Mammary epithelial cell (primary cell): ENCODE measurements at regions of chr9 and their contacts with region 1.

Region 1: GRCh38 chr9:123225374-123225813 is 43.0 kb downstream of the STRBP start:
- DNase-seq: peak; percentile 88
- H3K4me3 ChIP-seq: no peak overlapping the region
- H3K27ac ChIP-seq: no peak overlapping the region
- H3K4me1 ChIP-seq: peaks cover 13% of the 10 kb centered on the region
- H3K27me3 ChIP-seq: no peaks in the 10 kb centered on the region
- CTCF ChIP-seq: peak; percentile 33 to 70

Region 2: GRCh38 chr9:123081824-123082223 is 143.6 kb before region 1 on chr9:
- CTCF ChIA-PET with region 1: no interaction called
- dilution Hi-C with region 1: no loop called
- in situ Hi-C with region 1: no loop called
- intact Hi-C with region 1: loop called (anchors 5 kb)
- DNase-seq: peak; percentile 23
- H3K4me3 ChIP-seq: no peak overlapping the region
- H3K27ac ChIP-seq: no peak overlapping the region
- H3K4me1 ChIP-seq: peaks cover 3% of the 10 kb centered on the region
- H3K27me3 ChIP-seq: no peaks in the 10 kb centered on the region
- CTCF ChIP-seq: peak; percentile 52 to 61

Region 3: DNA sequence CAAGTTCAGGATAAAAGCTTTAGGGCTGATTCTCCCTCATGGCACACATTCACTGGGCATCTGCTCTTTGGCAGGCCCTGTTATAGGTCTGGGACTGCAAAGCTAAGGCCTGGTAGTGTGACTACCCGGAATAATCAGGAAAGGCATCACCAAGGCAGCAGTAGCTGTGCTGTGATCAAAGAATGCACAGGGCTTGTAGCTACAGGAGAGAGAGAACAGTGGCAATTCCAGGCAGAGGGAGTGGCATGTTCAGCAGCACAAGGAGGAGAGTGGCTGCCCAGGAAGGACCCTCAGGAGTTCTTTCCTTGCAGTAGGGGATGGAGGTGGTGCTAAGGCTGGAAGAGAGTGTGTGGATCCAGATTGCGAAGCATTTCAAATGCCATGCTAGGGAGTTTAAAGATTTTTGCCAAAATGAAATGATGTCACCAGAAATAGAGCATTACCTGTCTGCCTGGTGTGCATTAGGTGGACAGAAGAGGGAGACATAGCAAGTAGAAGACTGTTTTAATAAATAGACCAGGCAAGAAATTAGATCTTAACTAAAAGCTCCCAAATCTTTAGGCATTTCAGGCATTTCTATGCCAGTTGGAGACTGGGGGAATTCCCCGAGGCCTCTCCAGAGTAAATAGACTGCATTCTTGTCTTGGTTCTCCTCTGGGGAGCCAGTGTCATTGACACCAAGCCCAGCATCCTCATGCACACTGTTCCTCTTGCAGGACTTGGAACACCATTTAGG is 122.9 kb before region 1 on chr9:
- CTCF ChIA-PET with region 1: interaction called, 3 read pairs
- dilution Hi-C with region 1: no loop called
- in situ Hi-C with region 1: no loop called
- intact Hi-C with region 1: loop called (anchors 1 kb)
- DNase-seq: peak; percentile 58
- H3K4me3 ChIP-seq: no peak overlapping the region
- H3K27ac ChIP-seq: no peak overlapping the region
- H3K4me1 ChIP-seq: no peaks in the 10 kb centered on the region
- H3K27me3 ChIP-seq: no peaks in the 10 kb centered on the region
- CTCF ChIP-seq: peak; percentile 32 to 59

Region 4: DNA sequence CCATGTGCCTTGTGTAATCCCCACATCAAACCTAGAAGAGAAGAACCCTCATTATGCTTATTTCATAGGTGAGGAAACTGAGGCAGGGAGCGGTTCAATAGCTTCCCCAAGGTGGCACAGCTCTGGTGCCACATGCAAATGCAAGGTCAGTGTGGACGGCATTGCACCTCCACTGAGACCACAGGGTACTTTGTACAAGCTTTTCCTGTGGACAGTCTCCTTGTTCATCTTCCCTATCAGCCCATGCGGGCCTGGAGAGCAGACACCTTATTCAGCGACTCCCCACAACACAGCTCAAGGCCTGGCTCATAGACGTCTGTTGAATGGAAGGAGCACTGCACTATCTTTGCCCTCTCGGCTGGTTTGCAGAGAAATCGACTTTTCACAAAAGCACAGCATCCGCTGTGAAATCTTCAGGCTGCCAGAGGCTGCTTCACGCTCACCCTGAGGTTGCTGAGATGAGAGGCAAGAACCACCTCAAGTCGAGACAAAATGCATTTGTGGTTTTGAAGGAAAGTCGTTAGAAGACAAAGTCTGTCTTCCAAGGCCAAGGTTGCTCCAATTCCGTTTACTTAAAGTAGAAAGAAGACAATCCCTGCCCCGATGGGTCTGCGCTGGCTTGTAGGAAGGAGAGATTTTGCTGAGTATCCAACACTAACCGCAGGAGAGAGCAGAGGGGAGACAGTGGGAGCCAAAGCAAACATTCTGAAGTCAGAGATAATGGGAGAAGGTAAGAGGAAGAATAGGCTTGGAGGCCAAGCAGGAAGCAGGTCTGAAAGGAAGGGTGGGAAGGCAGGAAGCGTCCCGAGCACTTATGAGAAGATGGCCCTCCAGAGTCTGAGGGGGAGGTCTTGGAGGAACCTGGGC is 77.2 kb after region 1 on chr9:
- CTCF ChIA-PET with region 1: no interaction called
- dilution Hi-C with region 1: no loop called
- in situ Hi-C with region 1: no loop called
- intact Hi-C with region 1: no loop called
- DNase-seq: no peak
- H3K4me3 ChIP-seq: no peak overlapping the region
- H3K27ac ChIP-seq: no peak overlapping the region
- H3K4me1 ChIP-seq: no peaks in the 10 kb centered on the region
- H3K27me3 ChIP-seq: no peaks in the 10 kb centered on the region
- CTCF ChIP-seq: no peak

Region 5: DNA sequence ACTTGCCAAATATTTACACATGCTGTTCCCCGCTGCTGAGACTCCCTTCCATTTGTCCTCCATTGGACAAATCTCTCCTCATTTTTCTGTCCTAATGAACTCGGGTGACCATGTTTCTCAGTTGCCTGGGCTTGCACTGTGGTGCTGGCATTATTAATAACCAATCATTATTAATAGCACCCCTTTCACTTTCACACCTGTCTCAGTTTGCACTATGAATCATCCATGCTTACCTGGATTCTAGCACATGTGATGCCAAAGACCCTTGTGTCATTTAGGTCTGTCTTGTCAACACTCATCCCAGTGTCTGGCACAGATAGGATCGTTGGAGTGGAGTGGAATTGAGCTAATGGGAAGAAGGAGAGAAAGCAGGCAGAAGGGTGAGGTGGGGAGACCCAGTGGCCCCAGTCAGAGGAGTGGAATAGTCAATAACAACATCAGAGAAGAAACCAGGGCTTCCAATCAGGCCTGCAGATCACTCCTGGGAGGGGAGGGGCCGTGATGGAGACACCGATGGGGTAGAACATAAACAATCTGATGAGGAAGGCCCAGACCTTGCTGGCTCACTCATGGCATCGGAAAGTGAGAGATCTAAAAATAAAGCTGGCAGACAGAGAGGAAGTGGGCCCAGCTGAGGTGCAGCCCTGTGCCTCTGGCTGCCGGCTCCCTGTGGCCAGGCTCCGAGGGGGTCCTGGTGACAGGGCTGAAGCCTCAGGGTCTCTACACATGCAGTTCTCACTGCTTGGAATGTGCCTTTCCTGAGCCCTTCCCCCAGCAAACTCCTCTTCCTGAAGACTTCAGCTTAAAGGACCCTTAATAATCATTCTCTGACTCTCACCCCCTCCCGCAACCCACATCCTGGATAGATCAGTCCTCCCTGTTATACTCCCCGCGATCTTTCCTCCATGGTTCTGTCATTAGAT is 97.1 kb after region 1 on chr9:
- CTCF ChIA-PET with region 1: no interaction called
- dilution Hi-C with region 1: no loop called
- in situ Hi-C with region 1: no loop called
- intact Hi-C with region 1: no loop called
- DNase-seq: no peak
- H3K4me3 ChIP-seq: no peak overlapping the region
- H3K27ac ChIP-seq: no peak overlapping the region
- H3K4me1 ChIP-seq: peaks cover 2% of the 10 kb centered on the region
- H3K27me3 ChIP-seq: peaks cover 3% of the 10 kb centered on the region
- CTCF ChIP-seq: no peak